Panc1 (cell line): ENCODE measurements at regions of chr20 and their contacts with region 1.

Region 1: DNA sequence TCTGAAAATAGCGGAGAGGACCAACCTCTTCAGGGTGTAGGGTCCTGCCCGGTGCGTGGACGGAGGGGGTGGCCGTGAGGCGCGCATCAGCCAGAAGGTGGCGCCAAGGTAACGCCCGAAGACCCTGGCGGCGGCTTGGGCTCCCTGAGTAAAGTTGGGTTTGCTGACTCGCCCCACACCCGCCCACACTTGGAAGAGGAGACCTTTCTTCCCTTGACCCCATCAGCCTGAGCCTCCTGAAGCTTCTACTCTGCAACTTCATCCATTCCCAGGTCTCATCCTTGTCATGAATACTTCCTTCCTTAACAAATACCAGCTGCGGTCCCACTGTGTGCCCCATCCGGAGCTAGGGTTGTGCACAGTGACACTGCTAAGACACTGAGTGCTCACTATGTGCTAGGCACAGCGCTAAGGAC is 14.6 kb downstream of the CD40 start:
- DNase-seq: no peak
- ATAC-seq: peak; percentile 94
- H3K4me3 ChIP-seq: no peak overlapping the region
- H3K27ac ChIP-seq: no peak overlapping the region
- H3K4me1 ChIP-seq: peaks cover 4% of the 10 kb centered on the region; the same call in 1 of the 2 replicates
- H3K27me3 ChIP-seq: peaks cover 6% of the 10 kb centered on the region; the same call in 1 of the 2 replicates
- CTCF ChIP-seq: peak; percentile 96

Region 2: GRCh38 chr20:45779011-45779915 is 353.4 kb before region 1 on chr20:
- CTCF ChIA-PET with region 1: no interaction called
- POLR2A ChIA-PET with region 1: no interaction called
- in situ Hi-C with region 1: no loop called
- intact Hi-C with region 1: no loop called
- DNase-seq: peak; percentile 99
- ATAC-seq: peak; percentile 89
- H3K4me3 ChIP-seq: no peak overlapping the region
- H3K27ac ChIP-seq: peak overlapping the region; percentile 84
- H3K4me1 ChIP-seq: peaks cover 44% of the 10 kb centered on the region
- H3K27me3 ChIP-seq: no peaks in the 10 kb centered on the region
- CTCF ChIP-seq: no peak

Region 3: GRCh38 chr20:46157625-46158024 is 24.9 kb after region 1 on chr20:
- CTCF ChIA-PET with region 1: no interaction called
- POLR2A ChIA-PET with region 1: interaction called, 14 read pairs
- in situ Hi-C with region 1: no loop called
- intact Hi-C with region 1: no loop called
- DNase-seq: no peak
- ATAC-seq: no peak
- H3K4me3 ChIP-seq: no peak overlapping the region
- H3K27ac ChIP-seq: no peak overlapping the region
- H3K4me1 ChIP-seq: no peaks in the 10 kb centered on the region
- H3K27me3 ChIP-seq: peaks cover under 1% of the 10 kb centered on the region; the same call in 1 of the 2 replicates
- CTCF ChIP-seq: no peak

Region 4: DNA sequence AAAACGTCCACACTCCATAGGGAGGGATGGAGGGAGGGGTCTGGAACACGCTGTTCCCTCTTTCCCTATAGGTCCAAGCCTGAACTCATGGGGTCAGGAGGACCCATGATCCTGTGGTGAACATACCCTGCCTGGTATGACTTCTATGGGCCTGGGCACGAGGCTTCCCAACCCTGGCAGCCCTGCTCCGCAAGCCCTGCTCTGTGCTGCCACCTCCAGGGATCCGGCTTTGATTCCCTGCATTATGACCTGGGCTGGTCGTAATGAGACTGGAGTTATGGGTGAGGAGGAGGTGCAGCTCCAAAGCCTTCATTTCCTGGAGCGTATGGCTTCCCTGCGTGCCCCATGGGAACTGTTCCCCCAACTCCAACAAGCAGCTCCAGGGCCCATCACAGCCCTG is 120.7 kb after region 1 on chr20:
- CTCF ChIA-PET with region 1: no interaction called
- POLR2A ChIA-PET with region 1: no interaction called
- in situ Hi-C with region 1: no loop called
- intact Hi-C with region 1: loop called (anchors 5 kb)
- DNase-seq: no peak
- ATAC-seq: peak; percentile 96
- H3K4me3 ChIP-seq: no peak overlapping the region
- H3K27ac ChIP-seq: no peak overlapping the region
- H3K4me1 ChIP-seq: peaks cover 3% of the 10 kb centered on the region; the same call in 1 of the 2 replicates
- H3K27me3 ChIP-seq: peaks cover 2% of the 10 kb centered on the region; the same call in 1 of the 2 replicates
- CTCF ChIP-seq: peak; percentile 70; the same call in 1 of the 2 replicates

Region 5: DNA sequence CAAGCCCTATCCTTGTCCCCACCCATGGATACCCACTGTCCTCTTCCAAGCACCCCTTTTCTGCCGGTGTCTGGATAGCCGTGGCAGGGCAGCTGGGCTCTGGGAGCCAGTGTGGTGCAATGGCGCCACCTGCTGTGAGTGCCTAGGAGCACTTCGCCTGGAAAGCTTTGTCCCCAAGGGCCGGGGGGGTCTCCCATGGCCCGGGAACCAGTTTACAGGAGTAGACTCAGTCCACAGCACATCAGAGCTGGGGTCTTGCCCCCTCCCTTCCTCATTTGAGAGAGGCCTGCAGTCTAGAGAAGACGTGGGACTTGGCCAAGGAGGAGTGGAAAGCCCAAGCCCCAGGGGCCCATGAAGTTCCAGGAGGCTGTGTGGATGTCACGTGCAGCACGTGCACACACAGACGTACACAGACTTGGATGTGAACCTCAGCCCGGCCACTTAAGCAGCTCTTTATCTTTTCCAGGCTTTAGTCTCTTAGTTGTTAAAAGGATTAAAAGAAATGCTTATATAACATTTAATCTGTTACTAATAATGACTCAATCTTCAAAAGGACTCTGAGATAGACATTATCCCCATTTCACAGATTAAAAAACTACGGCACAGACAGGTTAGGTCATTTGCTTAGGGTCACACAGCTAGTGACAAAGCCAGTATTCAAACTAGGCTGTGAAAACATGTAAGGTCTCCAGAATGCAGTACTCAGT is 216.5 kb after region 1 on chr20:
- CTCF ChIA-PET with region 1: interaction called, 7 read pairs
- POLR2A ChIA-PET with region 1: no interaction called
- in situ Hi-C with region 1: no loop called
- intact Hi-C with region 1: loop called (anchors 1 kb)
- DNase-seq: no peak
- ATAC-seq: peak; percentile 69
- H3K4me3 ChIP-seq: no peak overlapping the region
- H3K27ac ChIP-seq: no peak overlapping the region
- H3K4me1 ChIP-seq: no peaks in the 10 kb centered on the region; the same call in 1 of the 2 replicates
- H3K27me3 ChIP-seq: no peaks in the 10 kb centered on the region
- CTCF ChIP-seq: peak; percentile 88